PC-9 (cell line): ENCODE measurements at regions of chr3 and their contacts with region 1.

Region 1: DNA sequence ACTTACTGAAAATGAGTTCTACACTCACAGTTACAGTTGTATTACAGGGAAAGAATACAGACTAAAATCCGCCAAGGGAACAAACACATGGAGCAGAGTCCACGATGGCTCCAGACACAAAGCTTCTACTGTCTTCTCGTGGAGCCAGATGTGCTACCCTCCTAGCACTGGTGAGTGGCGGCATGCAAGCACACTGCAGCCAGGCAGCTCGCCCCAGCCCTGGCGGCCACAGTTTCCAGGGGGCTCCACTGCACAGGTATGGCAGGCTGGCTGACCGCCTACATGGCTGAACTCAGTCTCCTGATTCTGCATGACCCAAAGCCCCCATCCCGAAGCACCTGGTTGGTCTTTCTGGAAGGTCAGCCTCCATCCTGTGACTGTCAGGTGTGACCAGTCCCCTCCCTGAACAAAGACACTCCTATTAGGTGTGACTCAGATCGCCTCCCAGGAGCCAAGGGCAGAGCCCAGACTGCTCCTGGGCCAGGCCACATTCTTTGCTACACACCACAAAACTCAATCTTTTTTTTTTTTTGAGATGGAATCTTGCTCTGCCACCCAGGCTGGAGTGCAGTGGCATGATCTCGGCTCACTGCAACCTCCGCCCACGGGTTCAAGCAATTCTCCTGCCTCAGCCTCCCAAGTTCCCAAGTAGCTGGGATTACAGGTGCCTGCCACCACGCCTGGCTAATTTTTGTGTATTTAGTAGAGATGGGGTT is 51.6 kb downstream of the CFAP92 start:
- DNase-seq: peak; percentile 79 to 81
- H3K4me3 ChIP-seq: no peak overlapping the region
- H3K27ac ChIP-seq: no peak overlapping the region
- H3K4me1 ChIP-seq: peaks cover 10% of the 10 kb centered on the region; the same call in 1 of the 2 replicates
- H3K27me3 ChIP-seq: no peaks in the 10 kb centered on the region
- CTCF ChIP-seq: no peak

Region 2: DNA sequence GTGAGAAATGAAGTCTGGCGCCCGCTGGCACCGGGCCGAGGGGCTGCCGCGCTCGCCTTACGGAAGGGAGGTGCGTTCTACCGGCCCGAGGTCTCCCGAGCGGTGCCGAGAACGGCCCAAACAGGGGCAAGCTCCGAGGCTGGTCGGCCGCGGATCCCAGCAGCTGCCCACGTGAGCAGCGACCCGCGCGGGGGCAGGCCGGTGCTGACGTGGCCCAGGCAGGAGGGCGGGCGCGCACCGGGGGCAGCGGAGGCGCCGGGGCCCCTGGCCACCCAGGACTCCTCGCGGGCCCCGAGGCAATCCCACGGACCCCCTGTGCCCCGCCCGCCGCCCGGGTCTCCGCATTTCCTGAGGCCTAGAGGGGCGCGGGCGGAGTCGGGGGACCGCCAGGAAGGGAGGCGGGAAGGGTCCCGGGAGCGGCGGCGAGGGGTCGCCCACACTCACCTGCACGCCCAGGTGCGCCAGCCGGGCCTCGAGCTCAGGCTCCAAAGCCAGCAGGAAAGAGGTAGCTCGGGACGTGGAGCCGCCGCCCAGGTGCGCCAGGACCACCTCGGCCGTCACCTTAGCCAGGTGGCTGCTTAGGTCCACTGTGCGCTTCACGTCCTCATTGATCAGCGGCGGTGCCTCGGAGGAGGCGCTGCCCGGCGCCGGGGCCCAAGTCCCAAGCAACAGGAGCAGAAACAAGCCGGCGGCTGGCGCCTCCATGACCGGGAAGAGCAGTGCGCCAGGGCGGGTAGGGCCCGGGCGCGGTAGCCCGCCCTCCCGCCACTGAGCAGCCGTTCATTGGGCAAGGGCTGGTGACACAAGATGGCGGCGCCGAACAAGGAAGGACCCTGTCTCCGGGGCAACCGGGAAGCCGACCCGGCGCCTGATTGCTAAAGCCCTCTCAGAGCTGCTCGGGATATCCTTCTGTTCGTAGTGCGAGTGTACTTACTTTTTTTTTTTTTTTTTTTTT is 291.9 kb before region 1 on chr3 and contains the start of gene RPN1:
- CTCF ChIA-PET with region 1: interaction called, 4 read pairs
- POLR2A ChIA-PET with region 1: interaction called, 11 read pairs
- intact Hi-C with region 1: no loop called
- DNase-seq: peak; percentile 90 to 98
- H3K4me3 ChIP-seq: peak within 1 kb of the TSS; percentile 98
- H3K27ac ChIP-seq: peak within 1 kb of the TSS; percentile 92
- H3K4me1 ChIP-seq: peaks cover 9% of the 10 kb centered on the region
- H3K27me3 ChIP-seq: no peaks in the 10 kb centered on the region
- CTCF ChIP-seq: no peak
- total RNA-seq, gene RPN1: 185 and 191 TPM in 2 replicates

Region 3: DNA sequence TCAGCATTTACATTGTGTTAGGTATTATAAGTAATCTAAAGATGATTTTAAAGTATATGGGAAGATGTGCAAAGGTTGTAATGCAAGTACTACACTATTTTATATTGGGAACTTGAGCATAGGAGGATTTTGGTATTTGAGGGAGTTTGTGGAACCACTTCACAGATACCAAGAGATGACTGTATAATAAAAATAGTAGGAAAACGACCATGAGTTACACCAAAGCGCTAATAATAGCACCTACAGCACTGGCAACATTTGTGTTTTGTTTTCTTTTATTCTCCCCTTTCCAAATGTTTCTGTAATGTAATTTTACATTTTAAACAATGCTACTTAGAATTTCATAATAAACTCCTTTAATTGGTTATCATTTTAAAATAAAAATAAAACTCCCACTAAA is 230.9 kb after region 1 on chr3:
- CTCF ChIA-PET with region 1: no interaction called
- POLR2A ChIA-PET with region 1: no interaction called
- intact Hi-C with region 1: no loop called
- DNase-seq: no peak
- H3K4me3 ChIP-seq: no peak overlapping the region
- H3K27ac ChIP-seq: no peak overlapping the region
- H3K4me1 ChIP-seq: no peaks in the 10 kb centered on the region
- H3K27me3 ChIP-seq: no peaks in the 10 kb centered on the region
- CTCF ChIP-seq: no peak